ENCODE measurements at regions of chr2 and their contacts with region 1.

Region 1: GRCh38 chr2:182066400-182067087 is 80.9 kb downstream of the PPP1R1C start:
- DNase-seq: no peak

Region 2: GRCh38 chr2:181977661-181978350 is 88.7 kb before region 1 on chr2:
- intact Hi-C with region 1: loop called in 1 of 2 experiments (anchors 10 kb)
- DNase-seq: no peak

Measured in posterior vena cava (tissue), 2 donors.